ENCODE measurements at regions of chr1 and their contacts with region 1.

Region 1: GRCh38 chr1:153951801-153952200 is 5.3 kb upstream of the DENND4B start:
- DNase-seq: no peak
- H3K4me3 ChIP-seq: no peak overlapping the region
- H3K27ac ChIP-seq: no peak overlapping the region
- H3K4me1 ChIP-seq: peaks cover 8 to 20% of the 10 kb centered on the region in 2 donors
- H3K27me3 ChIP-seq: no peaks in the 10 kb centered on the region
- CTCF ChIP-seq: no peak
- POLR2A ChIP-seq: no peak

Region 2: GRCh38 chr1:153912349-153912748 is 39.5 kb before region 1 on chr1:
- intact Hi-C with region 1: loop called in 1 of 2 experiments (anchors 5 kb)
- DNase-seq: no peak
- H3K4me3 ChIP-seq: no peak overlapping the region
- H3K27ac ChIP-seq: no peak overlapping the region
- H3K4me1 ChIP-seq: peaks cover 12 to 26% of the 10 kb centered on the region in 2 donors
- H3K27me3 ChIP-seq: no peaks in the 10 kb centered on the region
- CTCF ChIP-seq: no peak
- POLR2A ChIP-seq: no peak

Region 3: DNA sequence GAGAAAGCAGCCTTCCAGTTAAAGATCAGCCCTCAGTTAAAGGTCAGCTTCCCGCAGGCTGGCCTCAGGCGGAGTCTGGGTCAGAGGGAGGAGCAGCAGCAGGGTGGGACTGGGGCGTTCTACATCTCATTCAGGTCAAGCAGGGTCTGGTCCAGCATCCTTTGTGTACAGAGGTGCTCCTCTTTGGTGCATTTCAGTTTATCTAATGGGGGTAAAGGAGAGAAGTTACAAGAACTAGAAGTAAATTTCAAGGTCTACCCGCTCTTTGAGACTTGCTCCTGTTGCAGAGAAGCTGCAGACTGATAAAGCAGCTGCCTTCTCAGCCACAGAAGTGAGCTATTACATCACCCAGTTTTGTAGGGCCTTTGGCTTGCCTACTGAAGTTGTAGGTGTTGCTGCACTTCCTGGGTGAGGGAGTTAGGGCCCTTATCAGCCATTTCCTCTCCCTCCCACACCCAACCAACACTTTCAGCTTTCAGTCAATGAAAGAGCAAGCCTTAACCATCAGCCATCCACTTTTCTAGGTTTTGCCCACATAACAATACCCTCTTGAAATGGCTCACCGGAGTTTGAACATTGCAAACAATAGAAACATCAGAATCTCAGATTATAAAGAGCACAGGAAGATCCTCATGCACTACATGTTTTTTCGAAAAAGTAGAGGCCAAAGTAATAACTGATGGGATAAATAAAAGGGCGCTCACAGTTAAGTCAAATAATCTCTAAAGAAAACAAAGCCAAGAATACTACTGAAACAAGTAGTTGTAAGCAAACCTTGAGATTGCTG is 205.9 kb after region 1 on chr1:
- intact Hi-C with region 1: no loop called
- DNase-seq: peak in 5 of 7 donors; percentile 38 to 57 (median 43)
- H3K4me3 ChIP-seq: no peak overlapping the region
- H3K27ac ChIP-seq: peak overlapping the region in 3 of 5 donors; percentile 36 to 85 (median 46)
- H3K4me1 ChIP-seq: peaks cover 12 to 24% of the 10 kb centered on the region in 2 donors
- H3K27me3 ChIP-seq: no peaks in the 10 kb centered on the region
- CTCF ChIP-seq: no peak
- POLR2A ChIP-seq: peak in 1 of 2 donors; percentile 28

Measured in adrenal gland (tissue), 19 donors.